ENCODE measurements at regions of chr11 and their contacts with region 1.

Region 1: DNA sequence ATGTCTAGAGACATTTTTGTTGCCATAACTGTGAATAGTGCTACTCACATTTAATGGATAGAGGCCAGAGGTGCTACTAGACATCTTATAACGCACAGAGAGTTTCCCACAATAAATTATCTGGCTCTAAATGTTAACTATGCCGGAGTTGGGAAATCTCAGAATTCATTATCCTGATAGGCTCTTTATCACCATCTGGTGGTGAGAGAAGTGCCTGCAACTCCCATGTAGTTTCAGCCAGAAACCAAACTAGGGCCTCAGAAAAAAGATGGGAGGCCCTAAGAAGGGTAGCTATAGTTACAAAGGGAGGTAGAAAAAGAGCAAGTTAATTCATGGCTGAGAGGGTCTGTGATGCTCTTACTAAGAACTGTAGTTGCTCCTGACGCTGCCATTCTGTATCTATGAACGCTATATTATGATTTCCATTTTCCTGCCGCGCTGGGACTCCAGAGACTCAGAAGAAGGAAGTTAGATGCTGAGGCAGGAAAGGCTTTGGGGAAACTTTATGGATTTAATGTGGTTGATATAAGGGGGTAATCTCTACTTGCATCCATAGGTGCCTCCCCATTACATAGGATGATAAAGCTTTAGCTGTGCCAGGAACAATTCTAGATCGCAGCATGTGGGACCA is 22.9 kb upstream of the MRPL17 start:
- DNase-seq: peak in 11 of 14 experiments; percentile 11 to 72 (median 21)
- ATAC-seq: peak; percentile 88
- H3K4me3 ChIP-seq: no peak overlapping the region
- H3K4me3 Mint-ChIP-seq: no peak overlapping the region
- H3K27ac ChIP-seq: no peak overlapping the region
- H3K27ac Mint-ChIP-seq: peak overlapping the region; percentile 78
- H3K4me1 ChIP-seq: no peaks in the 10 kb centered on the region
- H3K4me1 Mint-ChIP-seq: peaks cover 30% of the 10 kb centered on the region
- H3K27me3 ChIP-seq: no peaks in the 10 kb centered on the region
- H3K27me3 Mint-ChIP-seq: no peaks in the 10 kb centered on the region
- CTCF ChIP-seq: peak; percentile 99

Region 2: DNA sequence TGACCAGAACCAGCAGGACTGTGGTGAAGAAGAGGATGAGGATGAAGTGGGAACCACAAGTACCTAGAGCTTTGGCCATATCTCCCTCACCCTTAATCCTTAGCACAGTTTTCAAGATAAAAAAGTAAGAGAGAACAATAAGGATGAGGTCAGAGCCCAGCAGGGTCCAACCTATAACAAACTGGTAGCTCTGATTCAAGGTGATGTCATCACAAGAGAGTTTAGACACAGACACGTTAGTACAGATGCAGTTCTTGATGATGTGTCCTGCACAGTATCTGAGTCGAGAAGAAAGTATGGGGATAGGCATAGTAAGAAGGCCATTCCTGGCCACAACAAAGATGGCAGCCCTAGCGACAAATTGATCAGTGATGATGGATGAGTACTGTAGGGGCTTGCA is 738.3 kb before region 1 on chr11:
- CTCF ChIA-PET with region 1: no interaction called
- POLR2A ChIA-PET with region 1: no interaction called
- intact Hi-C with region 1: no loop called
- DNase-seq: no peak
- ATAC-seq: no peak
- H3K4me3 ChIP-seq: no peak overlapping the region
- H3K4me3 Mint-ChIP-seq: no peak overlapping the region
- H3K27ac ChIP-seq: no peak overlapping the region
- H3K27ac Mint-ChIP-seq: no peak overlapping the region
- H3K4me1 ChIP-seq: no peaks in the 10 kb centered on the region
- H3K4me1 Mint-ChIP-seq: no peaks in the 10 kb centered on the region
- H3K27me3 ChIP-seq: peaks cover 0 to 3% of the 10 kb centered on the region in 2 experiments
- H3K27me3 Mint-ChIP-seq: peaks cover 14% of the 10 kb centered on the region
- CTCF ChIP-seq: no peak

Region 3: GRCh38 chr11:6531267-6531752 is 174.7 kb before region 1 on chr11:
- CTCF ChIA-PET with region 1: interaction called, 12 read pairs
- POLR2A ChIA-PET with region 1: no interaction called
- intact Hi-C with region 1: loop called (anchors 1 to 2 kb)
- DNase-seq: peak in 4 of 14 experiments; percentile 36 to 70 (median 64)
- ATAC-seq: peak; percentile 79
- H3K4me3 ChIP-seq: no peak overlapping the region
- H3K4me3 Mint-ChIP-seq: no peak overlapping the region
- H3K27ac ChIP-seq: no peak overlapping the region
- H3K27ac Mint-ChIP-seq: no peak overlapping the region
- H3K4me1 ChIP-seq: peaks cover 4% of the 10 kb centered on the region
- H3K4me1 Mint-ChIP-seq: peaks cover 14% of the 10 kb centered on the region
- H3K27me3 ChIP-seq: no peaks in the 10 kb centered on the region
- H3K27me3 Mint-ChIP-seq: no peaks in the 10 kb centered on the region
- CTCF ChIP-seq: peak; percentile 79

Region 4: GRCh38 chr11:6737872-6738466 is 31.9 kb after region 1 on chr11:
- CTCF ChIA-PET with region 1: interaction called, 10 read pairs
- POLR2A ChIA-PET with region 1: interaction called, 3 read pairs
- intact Hi-C with region 1: loop called in 1 of 2 experiments (anchors 2 kb)
- DNase-seq: peak; percentile 27 to 88 (median 57)
- ATAC-seq: peak; percentile 56
- H3K4me3 ChIP-seq: no peak overlapping the region
- H3K4me3 Mint-ChIP-seq: peak overlapping the region; percentile 12
- H3K27ac ChIP-seq: peak overlapping the region; percentile 2 to 56
- H3K27ac Mint-ChIP-seq: peak overlapping the region; percentile 76
- H3K4me1 ChIP-seq: peaks cover 62% of the 10 kb centered on the region
- H3K4me1 Mint-ChIP-seq: peaks cover 88% of the 10 kb centered on the region
- H3K27me3 ChIP-seq: no peaks in the 10 kb centered on the region
- H3K27me3 Mint-ChIP-seq: no peaks in the 10 kb centered on the region
- CTCF ChIP-seq: peak; percentile 77

Region 5: DNA sequence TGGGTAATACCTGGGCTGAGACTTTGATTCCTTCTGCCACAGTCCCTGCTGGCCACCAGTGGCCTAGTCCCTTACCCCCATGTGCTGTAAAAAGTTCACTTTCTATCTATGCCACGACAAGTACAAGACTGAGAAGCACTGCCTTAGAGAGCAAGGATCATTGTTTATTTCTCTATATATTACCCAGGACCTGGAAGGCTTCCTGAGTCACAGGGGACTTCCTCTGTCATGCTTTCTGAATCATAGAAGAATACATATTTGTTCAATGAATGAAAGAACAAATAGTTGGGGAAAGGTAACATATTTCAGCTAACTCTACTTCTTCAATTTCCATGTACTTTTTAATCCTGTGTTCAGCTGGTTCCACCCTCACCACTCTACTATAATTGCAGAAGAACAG is 540.2 kb after region 1 on chr11:
- CTCF ChIA-PET with region 1: no interaction called
- POLR2A ChIA-PET with region 1: no interaction called
- intact Hi-C with region 1: no loop called
- DNase-seq: no peak
- ATAC-seq: no peak
- H3K4me3 ChIP-seq: no peak overlapping the region
- H3K4me3 Mint-ChIP-seq: no peak overlapping the region
- H3K27ac ChIP-seq: no peak overlapping the region
- H3K27ac Mint-ChIP-seq: no peak overlapping the region
- H3K4me1 ChIP-seq: no peaks in the 10 kb centered on the region
- H3K4me1 Mint-ChIP-seq: no peaks in the 10 kb centered on the region
- H3K27me3 ChIP-seq: peaks cover 13% of the 10 kb centered on the region in 2 experiments
- H3K27me3 Mint-ChIP-seq: peaks cover 47% of the 10 kb centered on the region
- CTCF ChIP-seq: no peak

Measured in CD4-positive, alpha-beta T cell (primary cell).